K562 (cell line): ENCODE measurements at regions of chr5 and their contacts with region 1.

Region 1: DNA sequence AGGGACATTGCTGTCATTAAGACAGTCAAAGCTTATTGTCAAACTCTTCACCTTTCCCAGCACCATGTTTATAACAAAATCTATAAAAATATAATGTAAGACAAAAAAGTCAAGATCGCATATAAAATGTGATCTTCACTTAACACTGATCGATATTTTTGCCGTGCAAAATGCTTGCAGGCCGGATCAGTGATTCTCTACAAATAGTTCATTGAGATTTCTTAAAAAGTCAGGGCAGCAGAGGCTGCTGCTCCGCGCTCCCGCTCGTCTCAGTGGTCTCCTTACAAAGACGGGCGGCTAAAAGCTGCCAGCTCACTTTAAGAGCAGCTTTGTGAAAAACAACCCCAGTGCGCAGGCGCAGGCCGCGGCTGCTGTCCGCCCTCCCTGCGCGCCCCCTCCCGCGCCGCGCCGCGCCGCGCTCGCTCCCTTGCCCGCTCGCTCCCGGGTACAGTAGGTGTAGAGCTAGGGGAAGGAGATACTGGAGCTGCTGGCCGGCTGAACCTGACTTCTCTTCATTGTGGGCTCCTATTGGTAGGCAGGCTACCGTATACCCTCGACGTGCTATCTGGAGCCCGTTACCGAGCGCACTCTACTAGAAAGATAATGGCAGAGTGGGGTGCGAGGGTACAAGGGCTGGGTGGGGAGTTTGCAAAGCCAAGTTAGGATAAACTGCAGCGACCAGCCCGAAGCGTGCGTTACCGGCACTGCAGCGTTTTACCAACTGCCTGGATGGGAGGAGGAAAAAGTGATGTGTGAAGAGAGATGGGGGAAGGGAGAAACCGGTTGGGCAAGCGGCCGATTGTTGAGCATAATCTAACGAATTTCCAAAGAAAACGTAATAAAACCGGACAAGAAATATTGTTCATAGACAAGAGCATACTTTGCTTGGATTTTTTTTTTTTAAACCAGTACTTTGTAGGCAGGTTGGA is at the start of gene ARRDC3:
- DNase-seq: peak; percentile 81 to 98 (median 88)
- ATAC-seq: peak; percentile 64
- H3K4me3 ChIP-seq: peak within 1 kb of the TSS; percentile 60
- H3K27ac ChIP-seq: peak within 1 kb of the TSS; percentile 96
- H3K4me1 ChIP-seq: no peaks in the 10 kb centered on the region
- H3K27me3 ChIP-seq: no peaks in the 10 kb centered on the region
- CTCF ChIP-seq: no peak
- EP300 ChIP-seq: peak; percentile 23
- POLR2A ChIP-seq: peak; percentile 99
- RAD21 ChIP-seq: peak in 1 of 2 experiments; percentile 16; a peak in 1 of 4 replicates
- polyA plus RNA-seq, gene ARRDC3: 23.8 to 30.2 TPM

Region 2: DNA sequence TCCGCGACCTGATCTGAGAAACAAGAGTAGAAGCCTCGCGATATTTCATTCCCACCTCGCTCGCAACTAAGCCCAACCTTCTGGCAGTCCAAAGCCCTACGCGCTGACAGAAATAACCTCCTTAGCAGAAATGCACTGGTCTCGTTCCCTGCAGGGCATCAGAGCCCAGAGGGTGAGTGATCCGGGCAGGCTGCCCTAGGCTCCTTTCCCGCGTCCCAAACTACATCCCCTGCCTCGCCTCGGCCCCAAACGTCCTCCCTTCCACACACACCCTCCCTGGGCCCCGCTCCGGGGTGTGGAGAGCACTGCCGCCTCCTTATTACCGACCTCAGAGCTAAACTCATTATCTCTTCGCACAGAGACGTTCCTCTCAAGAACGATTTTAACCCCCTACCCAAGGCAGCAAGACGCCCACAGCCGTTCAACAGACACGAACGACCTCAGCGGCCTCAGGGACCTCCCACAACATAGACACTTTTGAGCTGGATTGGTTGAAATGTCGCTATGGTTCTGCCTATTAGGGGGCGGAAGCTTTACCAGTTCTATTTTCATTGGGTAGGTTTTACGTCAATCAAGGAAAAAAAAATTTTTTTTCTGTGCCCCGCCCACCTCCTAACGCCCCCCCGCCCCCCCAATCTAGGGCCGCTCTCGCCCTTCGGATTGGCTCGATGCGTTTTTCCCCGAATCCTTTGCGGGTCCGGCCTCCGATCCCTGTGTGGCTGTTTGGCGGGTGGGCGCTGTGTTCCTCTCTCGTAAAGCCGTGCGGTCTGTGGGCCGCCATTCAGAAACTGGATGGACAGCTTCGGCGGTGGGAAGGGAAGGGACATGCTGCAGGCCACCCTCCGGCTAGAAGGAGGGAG is 973.7 kb before region 1 on chr5 and contains the start of gene CETN3:
- CTCF ChIA-PET with region 1: no interaction called
- POLR2A ChIA-PET with region 1: interaction called, 3 read pairs
- in situ Hi-C with region 1: no loop called
- intact Hi-C with region 1: loop called (anchors 2 kb)
- DNase-seq: peak; percentile 92 to 96 (median 94)
- ATAC-seq: peak; percentile 89
- H3K4me3 ChIP-seq: peak within 1 kb of the TSS; percentile 83
- H3K27ac ChIP-seq: peak within 1 kb of the TSS; percentile 99
- H3K4me1 ChIP-seq: no peaks in the 10 kb centered on the region; a peak in 1 of 5 replicates
- H3K27me3 ChIP-seq: no peaks in the 10 kb centered on the region
- CTCF ChIP-seq: 0 out of 6 replicates have a peak, but pooled peaks of 1 of the 3 experiments have one; percentile 3
- EP300 ChIP-seq: no peak
- POLR2A ChIP-seq: peak; percentile 99
- RAD21 ChIP-seq: no peak
- polyA plus RNA-seq, gene CETN3: 80.5 to 91.3 TPM

Region 3: GRCh38 chr5:90932052-90932699 is 451.1 kb before region 1 on chr5:
- CTCF ChIA-PET with region 1: interaction called, 28 read pairs
- POLR2A ChIA-PET with region 1: interaction called, 7 read pairs
- in situ Hi-C with region 1: no loop called
- intact Hi-C with region 1: loop called (anchors 2 kb)
- DNase-seq: peak; percentile 49 to 67 (median 56)
- ATAC-seq: peak; percentile 86
- H3K4me3 ChIP-seq: no peak overlapping the region
- H3K27ac ChIP-seq: no peak overlapping the region
- H3K4me1 ChIP-seq: peaks cover 0 to 12% of the 10 kb centered on the region in 2 experiments; a peak in 2 of 5 replicates
- H3K27me3 ChIP-seq: no peaks in the 10 kb centered on the region
- CTCF ChIP-seq: peak; percentile 60 to 82 (median 81); a peak in 5 of 6 replicates
- EP300 ChIP-seq: no peak
- POLR2A ChIP-seq: no peak
- RAD21 ChIP-seq: peak; percentile 74 to 78

Region 4: DNA sequence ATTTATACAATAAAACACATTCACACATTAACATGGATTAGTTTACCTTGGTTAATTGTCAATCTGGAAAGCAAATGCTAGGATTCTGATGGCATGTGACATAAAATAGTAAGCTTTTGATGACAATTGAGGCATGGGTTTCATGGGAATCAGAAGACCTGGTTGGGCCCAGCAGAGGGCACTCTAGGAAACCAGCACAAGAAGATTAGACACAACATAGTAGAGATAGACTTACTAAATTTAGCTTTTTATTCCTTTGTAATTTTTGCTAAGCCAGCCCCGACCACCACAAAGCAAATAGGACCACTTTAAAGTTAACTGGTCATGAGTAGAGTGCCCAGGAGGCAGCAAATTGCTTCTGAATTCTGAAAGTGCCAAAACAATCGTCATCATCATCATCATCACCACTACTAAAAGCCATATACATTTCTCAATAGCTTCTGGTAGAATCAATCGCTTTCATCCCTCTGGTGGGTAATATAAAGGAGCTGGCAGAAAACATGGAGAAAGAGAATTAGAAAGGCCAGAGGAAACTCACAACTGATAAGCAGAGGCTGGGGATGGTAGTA is 163.4 kb before region 1 on chr5:
- CTCF ChIA-PET with region 1: interaction called, 62 read pairs
- POLR2A ChIA-PET with region 1: interaction called, 8 read pairs
- in situ Hi-C with region 1: loop called (anchors 5 kb)
- intact Hi-C with region 1: no loop called
- DNase-seq: peak in 3 of 4 experiments; percentile 29 to 42 (median 37)
- ATAC-seq: peak; percentile 85
- H3K4me3 ChIP-seq: no peak overlapping the region
- H3K27ac ChIP-seq: peak overlapping the region; percentile 50; the same call in 1 of the 3 replicates
- H3K4me1 ChIP-seq: peaks cover 0 to 14% of the 10 kb centered on the region in 2 experiments; a peak in 3 of 5 replicates
- H3K27me3 ChIP-seq: no peaks in the 10 kb centered on the region
- CTCF ChIP-seq: peak; percentile 48 to 57 (median 51); a peak in 5 of 6 replicates
- EP300 ChIP-seq: no peak
- POLR2A ChIP-seq: no peak
- RAD21 ChIP-seq: peak; percentile 24 to 44; a peak in 3 of 4 replicates

Region 5: GRCh38 chr5:91280362-91281269 is 102.7 kb before region 1 on chr5:
- CTCF ChIA-PET with region 1: interaction called, 5 read pairs
- POLR2A ChIA-PET with region 1: interaction called, 17 read pairs
- in situ Hi-C with region 1: no loop called
- intact Hi-C with region 1: loop called (anchors 2 kb)
- DNase-seq: peak; percentile 89 to 96 (median 92)
- ATAC-seq: peak; percentile 99
- H3K4me3 ChIP-seq: peak overlapping the region; percentile 39
- H3K27ac ChIP-seq: peak overlapping the region; percentile 84
- H3K4me1 ChIP-seq: peaks cover 16 to 21% of the 10 kb centered on the region in 2 experiments; a peak in 3 of 5 replicates
- H3K27me3 ChIP-seq: no peaks in the 10 kb centered on the region
- CTCF ChIP-seq: peak in 1 of 3 experiments; percentile 20; a peak in 2 of 6 replicates
- EP300 ChIP-seq: peak; percentile 70
- POLR2A ChIP-seq: peak; percentile 71
- RAD21 ChIP-seq: peak; percentile 23 to 34; a peak in 1 of 4 replicates

Region 6: DNA sequence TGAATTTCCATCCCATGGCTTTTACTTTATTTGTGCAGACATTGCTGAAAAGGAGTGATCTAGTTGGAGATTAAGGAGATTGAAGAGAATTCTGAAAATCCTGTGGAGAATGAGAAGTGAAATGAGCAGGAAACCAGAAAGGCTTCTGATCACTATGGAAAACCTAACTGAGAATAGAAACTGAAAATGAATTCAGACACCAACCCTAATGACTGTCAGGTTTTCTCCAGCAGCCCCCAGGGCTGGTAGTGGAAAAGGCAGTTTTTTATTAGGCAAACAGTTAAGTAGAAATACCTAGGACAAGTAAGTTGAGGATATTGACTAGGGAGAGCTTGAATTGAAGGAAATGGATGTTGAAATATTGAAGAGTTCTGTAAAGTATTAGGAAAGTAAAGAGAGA is 14.5 kb after region 1 on chr5:
- CTCF ChIA-PET with region 1: no interaction called
- POLR2A ChIA-PET with region 1: interaction called, 18 read pairs
- in situ Hi-C with region 1: no loop called
- intact Hi-C with region 1: no loop called
- DNase-seq: no peak
- ATAC-seq: no peak
- H3K4me3 ChIP-seq: no peak overlapping the region
- H3K27ac ChIP-seq: no peak overlapping the region
- H3K4me1 ChIP-seq: no peaks in the 10 kb centered on the region
- H3K27me3 ChIP-seq: no peaks in the 10 kb centered on the region
- CTCF ChIP-seq: no peak
- EP300 ChIP-seq: no peak
- POLR2A ChIP-seq: no peak
- RAD21 ChIP-seq: no peak

Region 7: GRCh38 chr5:91635950-91636734 is 252.9 kb after region 1 on chr5:
- CTCF ChIA-PET with region 1: no interaction called
- POLR2A ChIA-PET with region 1: no interaction called
- in situ Hi-C with region 1: no loop called
- intact Hi-C with region 1: no loop called
- DNase-seq: no peak
- ATAC-seq: no peak
- H3K4me3 ChIP-seq: no peak overlapping the region
- H3K27ac ChIP-seq: no peak overlapping the region
- H3K4me1 ChIP-seq: no peaks in the 10 kb centered on the region
- H3K27me3 ChIP-seq: no peaks in the 10 kb centered on the region
- CTCF ChIP-seq: no peak
- EP300 ChIP-seq: no peak
- POLR2A ChIP-seq: no peak
- RAD21 ChIP-seq: no peak